Aorta (tissue), 5 donors: ENCODE measurements at regions of chr10 and their contacts with region 1.

Region 1: GRCh38 chr10:23994479-23995046 is 214.4 kb upstream of the KIAA1217 start:
- DNase-seq: peak in 1 of 2 donors; percentile 45
- ATAC-seq: peak; percentile 78
- H3K4me3 ChIP-seq: no peak overlapping the region
- H3K27ac ChIP-seq: no peak overlapping the region
- H3K4me1 ChIP-seq: no peaks in the 10 kb centered on the region
- H3K27me3 ChIP-seq: no peaks in the 10 kb centered on the region

Region 2: DNA sequence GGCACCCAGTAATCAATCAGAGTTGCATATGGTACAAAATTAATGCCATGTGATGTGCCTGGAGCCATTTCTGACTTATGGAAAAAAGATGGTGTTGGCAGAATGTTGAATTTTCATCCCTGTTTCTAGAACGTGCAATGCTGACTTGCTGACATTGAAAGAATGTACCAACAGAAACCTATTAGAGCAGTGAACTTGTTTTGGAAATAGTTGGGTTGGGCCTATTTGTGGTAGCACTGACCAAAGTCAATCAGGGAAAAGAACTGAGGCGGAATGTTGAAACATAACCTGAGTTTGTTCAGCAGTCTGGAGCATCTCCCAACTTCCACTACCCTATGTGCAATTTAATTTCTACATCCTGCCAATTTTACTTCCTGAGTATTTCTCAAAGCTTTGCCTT is 202.7 kb after region 1 on chr10:
- intact Hi-C with region 1: loop called (anchors 5 kb)
- DNase-seq: no peak
- ATAC-seq: no peak
- H3K4me3 ChIP-seq: no peak overlapping the region
- H3K27ac ChIP-seq: no peak overlapping the region
- H3K4me1 ChIP-seq: no peaks in the 10 kb centered on the region
- H3K27me3 ChIP-seq: no peaks in the 10 kb centered on the region

Region 3: DNA sequence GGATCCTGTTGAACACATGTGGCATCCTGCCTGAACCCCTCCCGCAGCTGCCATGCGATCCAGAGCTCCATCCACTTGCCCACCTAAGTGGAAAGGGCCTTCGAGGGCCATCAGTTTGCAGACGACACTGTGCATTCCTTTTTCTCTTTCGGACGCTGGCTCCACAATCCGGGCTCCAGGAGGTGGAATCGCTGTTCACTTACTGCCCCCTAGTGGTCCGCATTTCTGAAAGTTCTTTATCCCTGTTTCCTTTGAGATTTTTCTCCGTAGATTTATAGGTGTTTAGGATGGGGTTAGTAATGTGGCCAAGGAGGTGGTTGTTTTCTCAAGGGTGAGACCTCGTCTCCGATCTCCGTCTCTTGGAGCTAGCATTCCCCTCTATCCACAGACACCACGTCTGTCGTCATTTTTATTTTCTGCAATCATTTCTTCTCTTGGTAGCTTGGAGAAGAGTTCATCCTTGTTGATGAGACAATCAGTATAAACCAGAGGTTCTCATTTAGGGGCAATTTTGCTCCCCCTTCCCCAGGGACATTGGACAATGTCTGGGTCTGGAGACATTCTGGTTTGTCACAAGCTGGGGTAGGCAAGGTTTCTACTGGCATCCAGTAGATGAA is 524.5 kb after region 1 on chr10:
- intact Hi-C with region 1: loop called (anchors 2 kb)
- DNase-seq: peak in 1 of 2 donors; percentile 53
- ATAC-seq: peak; percentile 76
- H3K4me3 ChIP-seq: no peak overlapping the region
- H3K27ac ChIP-seq: no peak overlapping the region
- H3K4me1 ChIP-seq: peaks cover 0 to 3% of the 10 kb centered on the region in 2 donors
- H3K27me3 ChIP-seq: no peaks in the 10 kb centered on the region

Region 4: DNA sequence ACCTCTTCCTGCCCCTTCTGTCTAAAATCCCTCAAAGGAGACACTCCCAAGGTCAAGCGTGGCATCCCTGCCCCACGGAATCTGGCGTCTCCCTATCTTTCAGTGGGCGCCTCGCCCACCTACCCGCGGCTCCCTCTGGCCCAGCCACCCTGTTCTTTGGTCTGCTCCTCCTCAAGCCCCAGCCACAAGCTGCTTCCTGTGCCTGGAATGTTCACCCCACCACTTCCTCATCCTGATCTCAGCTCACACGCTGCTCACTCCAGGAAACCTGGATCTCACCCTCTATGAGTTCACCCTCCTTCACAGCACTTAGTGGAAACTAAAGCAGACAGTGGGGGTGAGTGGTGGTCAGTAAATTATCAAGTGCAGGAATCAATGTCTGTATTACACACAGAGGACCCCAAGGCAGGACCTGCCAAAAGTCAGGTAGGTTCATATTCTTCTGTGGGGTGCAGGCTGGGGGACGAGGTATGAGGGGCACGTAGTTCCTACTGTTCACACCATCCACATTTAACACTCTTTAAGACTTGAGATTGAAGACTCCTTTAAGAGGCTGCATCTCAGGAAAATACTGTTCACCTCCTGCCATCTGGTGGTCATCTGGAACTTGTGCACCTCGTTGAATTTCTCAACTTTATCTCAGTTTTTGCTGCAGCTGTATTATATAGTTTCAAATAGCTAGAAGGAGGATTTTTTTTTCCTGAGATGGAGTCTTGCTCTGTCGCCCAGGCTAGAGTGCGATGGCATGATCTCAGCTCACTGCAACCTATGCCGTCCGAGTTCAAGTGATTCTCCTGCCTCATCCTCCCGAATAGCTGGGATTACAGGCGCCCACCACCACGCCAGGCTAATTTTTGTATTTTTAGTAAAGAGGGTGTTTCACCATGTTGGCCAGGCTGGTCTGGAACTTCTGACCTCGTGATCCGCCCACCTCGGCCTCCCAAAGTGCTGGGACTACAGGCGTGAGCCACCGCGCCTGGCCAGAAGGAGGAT is 562.5 kb after region 1 on chr10:
- intact Hi-C with region 1: loop called in 1 of 2 experiments (anchors 10 kb)
- DNase-seq: no peak
- ATAC-seq: no peak
- H3K4me3 ChIP-seq: no peak overlapping the region
- H3K27ac ChIP-seq: no peak overlapping the region
- H3K4me1 ChIP-seq: no peaks in the 10 kb centered on the region
- H3K27me3 ChIP-seq: no peaks in the 10 kb centered on the region